ENCODE measurements at regions of chr2 and their contacts with region 1.

Region 1: DNA sequence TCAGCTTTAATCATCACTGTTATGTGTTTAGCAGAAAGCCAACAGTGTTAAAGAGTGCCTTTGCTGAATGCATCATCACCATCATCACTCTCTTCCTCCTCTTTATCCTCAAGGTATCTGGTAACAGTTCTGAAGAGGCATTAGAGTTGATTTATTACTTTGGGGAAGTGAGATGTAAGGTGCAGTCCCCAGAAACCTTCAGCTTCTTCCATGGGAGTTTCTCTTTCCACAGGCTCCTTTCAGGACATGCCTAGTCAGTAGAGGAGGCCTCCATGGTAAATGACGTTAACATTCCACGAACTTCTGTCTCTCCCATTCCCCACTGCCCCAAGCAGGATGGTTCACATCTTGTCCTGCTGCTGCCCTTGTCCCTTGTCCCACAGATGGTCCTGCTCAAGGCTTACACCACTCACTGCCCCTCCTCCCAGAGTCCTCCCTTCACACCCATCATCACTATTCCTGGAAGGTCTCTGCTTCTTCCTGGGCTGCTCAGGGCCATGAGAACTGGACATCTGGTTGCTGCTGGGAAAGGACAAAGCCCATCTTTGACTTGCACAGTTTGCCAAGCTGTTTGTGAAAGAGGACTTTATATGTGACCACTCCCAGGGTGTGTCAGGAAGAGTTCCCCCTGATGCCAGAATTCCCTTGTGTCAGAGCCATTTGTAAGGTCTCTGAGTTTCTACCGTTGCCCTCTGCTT is 5.3 kb upstream of the REG1A start:
- DNase-seq: no peak
- ATAC-seq: peak in 1 of 2 donors; percentile 31
- H3K4me3 ChIP-seq: no peak overlapping the region
- H3K27ac ChIP-seq: no peak overlapping the region
- H3K4me1 ChIP-seq: no peaks in the 10 kb centered on the region
- H3K27me3 ChIP-seq: no peaks in the 10 kb centered on the region

Region 2: GRCh38 chr2:78439122-78439521 is 675.8 kb before region 1 on chr2:
- intact Hi-C with region 1: no loop called
- DNase-seq: no peak
- ATAC-seq: no peak
- H3K4me3 ChIP-seq: no peak overlapping the region
- H3K27ac ChIP-seq: no peak overlapping the region
- H3K4me1 ChIP-seq: no peaks in the 10 kb centered on the region
- H3K27me3 ChIP-seq: no peaks in the 10 kb centered on the region

Region 3: GRCh38 chr2:79099140-79099686 is 15.7 kb before region 1 on chr2:
- intact Hi-C with region 1: loop called in 1 of 4 experiments (anchors 1 kb)
- DNase-seq: no peak
- ATAC-seq: no peak
- H3K4me3 ChIP-seq: no peak overlapping the region
- H3K27ac ChIP-seq: no peak overlapping the region
- H3K4me1 ChIP-seq: no peaks in the 10 kb centered on the region
- H3K27me3 ChIP-seq: no peaks in the 10 kb centered on the region

Measured in right cardiac atrium (tissue), 5 donors.